Activated T-helper 1 cell treated with anti-CD3 and anti-CD28 coated beads, Interleukin-12 subunit alpha, Interleukin-12 subunit beta, Interleukin-2, Interleukin-4 antibody, amounts not matched to agents 30 ng/mL and 10 ng/mL and 1 ng/mL, durations not matched to agents 14 hours and 24 hours and 36 hours (primary cell): ENCODE measurements at regions of chr16 and their contacts with region 1.

Region 1: DNA sequence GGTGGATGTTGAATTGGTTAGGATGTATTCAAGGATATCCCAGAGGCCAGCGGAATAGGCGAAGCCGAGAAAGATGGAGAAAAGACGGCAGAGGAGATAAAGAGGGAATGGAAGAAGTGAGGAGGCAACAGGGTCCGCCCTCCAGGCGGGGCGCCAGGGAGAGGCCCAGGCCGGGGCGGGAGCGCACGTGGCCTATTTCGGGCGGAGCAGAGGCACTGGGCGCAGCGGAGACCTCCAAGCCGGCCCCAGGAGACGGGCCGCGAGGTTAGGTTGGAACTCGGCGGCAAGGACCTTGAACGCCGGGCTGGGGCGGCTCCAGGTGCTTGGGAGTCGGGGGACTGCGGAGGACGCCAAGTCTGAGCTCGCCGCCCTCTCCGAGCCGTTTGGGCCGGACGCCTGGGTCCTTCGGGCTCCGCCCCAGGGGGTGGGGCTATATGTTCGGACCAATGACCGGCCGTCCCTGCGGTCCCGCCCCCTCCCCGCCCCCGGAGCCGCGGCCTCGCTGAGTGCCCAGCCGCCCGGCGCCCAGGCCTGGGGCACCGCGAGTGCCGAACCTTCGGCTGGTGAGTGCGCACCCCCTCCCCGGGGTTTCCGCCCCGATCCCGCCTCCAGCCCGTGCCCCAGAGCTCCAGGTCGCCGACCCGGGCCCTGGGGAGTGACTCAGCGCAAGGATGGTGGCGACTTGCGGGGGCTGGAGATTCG is at the start of gene ZNF771:
- DNase-seq: peak; percentile 85
- H3K4me3 Mint-ChIP-seq: peak within 1 kb of the TSS; percentile 100
- H3K27ac Mint-ChIP-seq: peak within 1 kb of the TSS; percentile 100
- H3K4me1 Mint-ChIP-seq: peaks cover 25% of the 10 kb centered on the region
- H3K27me3 Mint-ChIP-seq: peaks cover 4% of the 10 kb centered on the region
- total RNA-seq, gene ZNF771: 8.1 and 8.9 TPM in 2 replicates

Region 2: GRCh38 chr16:30091474-30092372 is 315.5 kb before region 1 on chr16 and contains the start of gene TBX6:
- intact Hi-C with region 1: loop called (anchors 5 kb)
- DNase-seq: peak; percentile 94
- H3K4me3 Mint-ChIP-seq: peak within 1 kb of the TSS; percentile 88
- H3K27ac Mint-ChIP-seq: peak within 1 kb of the TSS; percentile 90
- H3K4me1 Mint-ChIP-seq: peaks cover 56% of the 10 kb centered on the region
- H3K27me3 Mint-ChIP-seq: no peaks in the 10 kb centered on the region
- total RNA-seq, gene TBX6: 1.6 and 1.8 TPM in 2 replicates

Region 3: DNA sequence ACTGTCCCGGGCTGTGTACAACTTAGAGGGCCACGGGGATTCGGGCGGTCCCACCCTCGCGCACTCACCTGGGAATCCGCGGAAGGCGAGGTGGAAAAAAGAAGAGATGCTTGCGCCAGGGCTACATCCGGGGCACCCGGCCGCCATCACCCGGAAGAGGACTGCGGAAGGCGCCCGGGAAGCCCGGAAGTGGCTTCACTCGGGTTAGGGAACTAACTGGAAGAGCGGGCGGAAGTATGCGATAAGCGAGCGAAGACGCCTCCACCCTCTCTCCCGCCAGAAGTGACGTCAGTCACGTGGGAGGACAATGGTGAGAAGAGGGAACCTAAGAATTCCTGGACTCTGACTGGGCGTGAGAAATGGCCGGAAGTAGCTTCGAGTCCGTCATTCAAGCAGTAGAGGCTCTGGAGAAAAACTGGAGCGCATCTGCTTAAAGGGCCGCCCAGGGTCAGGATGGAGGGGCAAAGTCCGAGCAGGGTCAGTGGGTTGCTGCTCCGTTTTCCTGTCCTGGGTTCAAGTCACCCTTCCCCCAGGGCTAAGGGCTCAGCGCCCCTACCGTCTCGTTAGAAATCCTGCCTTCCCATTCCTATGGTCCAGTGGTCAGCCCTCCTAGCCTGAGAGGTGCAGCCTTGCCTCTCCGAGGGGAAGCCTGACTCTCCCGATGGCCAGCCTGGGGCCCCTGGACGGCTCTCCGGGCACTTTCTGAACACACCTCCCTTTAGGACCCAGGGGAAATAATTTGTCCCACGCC is 51.9 kb before region 1 on chr16 and contains the start of gene CD2BP2:
- intact Hi-C with region 1: loop called (anchors 1 kb)
- DNase-seq: peak; percentile 87
- H3K4me3 Mint-ChIP-seq: peak within 1 kb of the TSS; percentile 91
- H3K27ac Mint-ChIP-seq: peak within 1 kb of the TSS; percentile 88
- H3K4me1 Mint-ChIP-seq: peaks cover 46% of the 10 kb centered on the region
- H3K27me3 Mint-ChIP-seq: no peaks in the 10 kb centered on the region
- total RNA-seq, gene CD2BP2: 100 and 104 TPM in 2 replicates

Region 4: DNA sequence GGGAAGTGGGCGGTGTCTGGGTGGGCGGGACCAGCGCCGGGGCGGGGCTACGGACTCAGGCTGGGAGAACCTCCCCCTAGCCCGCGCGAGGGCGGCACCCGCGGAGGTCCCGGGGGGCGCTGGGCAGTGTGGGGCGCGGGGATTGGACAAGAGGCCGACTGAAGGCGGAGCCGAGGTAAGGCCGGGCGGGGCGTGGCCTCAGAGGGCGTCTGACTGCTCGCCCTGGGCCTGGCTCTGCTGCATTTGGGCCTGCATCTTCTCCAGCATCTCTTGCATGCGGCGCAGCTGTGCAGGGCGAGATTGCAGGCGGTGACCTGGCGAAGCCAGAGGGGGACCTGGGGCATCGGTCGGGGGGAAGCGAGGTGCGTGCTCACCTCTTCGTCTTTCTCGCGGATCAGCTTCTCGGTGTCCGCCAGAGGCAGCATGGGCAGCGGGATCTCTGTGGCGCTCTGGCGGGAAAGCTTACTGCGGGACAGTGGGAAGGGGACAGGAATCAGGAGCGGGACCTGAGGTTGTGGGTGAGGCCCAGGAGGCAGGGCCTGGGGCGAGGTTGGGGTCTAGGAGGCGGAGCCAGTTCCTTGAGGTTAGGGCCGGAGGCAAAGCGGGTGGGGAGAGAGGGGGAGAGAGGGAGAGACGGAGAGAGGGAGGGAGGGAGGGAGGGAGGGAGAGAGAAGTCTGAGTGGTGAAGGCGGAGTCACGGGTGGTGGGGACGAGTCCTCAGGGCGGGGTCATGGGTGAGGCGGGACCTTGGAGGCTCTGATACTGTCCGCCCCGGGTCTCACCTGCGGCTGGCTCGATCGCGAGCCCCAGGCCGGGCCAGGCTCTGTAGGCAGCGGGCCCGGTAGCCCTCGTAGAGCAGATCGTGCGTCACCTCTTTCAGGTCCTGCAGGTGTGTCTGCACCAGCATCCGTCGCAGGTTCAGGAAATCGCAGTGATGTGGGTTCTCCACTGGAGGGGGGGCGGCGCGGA is 28.7 kb before region 1 on chr16:
- intact Hi-C with region 1: loop called (anchors 1 kb)
- DNase-seq: peak; percentile 98
- H3K4me3 Mint-ChIP-seq: peak overlapping the region; percentile 97
- H3K27ac Mint-ChIP-seq: peak overlapping the region; percentile 100
- H3K4me1 Mint-ChIP-seq: peaks cover 55% of the 10 kb centered on the region
- H3K27me3 Mint-ChIP-seq: peaks cover 2% of the 10 kb centered on the region

Region 5: DNA sequence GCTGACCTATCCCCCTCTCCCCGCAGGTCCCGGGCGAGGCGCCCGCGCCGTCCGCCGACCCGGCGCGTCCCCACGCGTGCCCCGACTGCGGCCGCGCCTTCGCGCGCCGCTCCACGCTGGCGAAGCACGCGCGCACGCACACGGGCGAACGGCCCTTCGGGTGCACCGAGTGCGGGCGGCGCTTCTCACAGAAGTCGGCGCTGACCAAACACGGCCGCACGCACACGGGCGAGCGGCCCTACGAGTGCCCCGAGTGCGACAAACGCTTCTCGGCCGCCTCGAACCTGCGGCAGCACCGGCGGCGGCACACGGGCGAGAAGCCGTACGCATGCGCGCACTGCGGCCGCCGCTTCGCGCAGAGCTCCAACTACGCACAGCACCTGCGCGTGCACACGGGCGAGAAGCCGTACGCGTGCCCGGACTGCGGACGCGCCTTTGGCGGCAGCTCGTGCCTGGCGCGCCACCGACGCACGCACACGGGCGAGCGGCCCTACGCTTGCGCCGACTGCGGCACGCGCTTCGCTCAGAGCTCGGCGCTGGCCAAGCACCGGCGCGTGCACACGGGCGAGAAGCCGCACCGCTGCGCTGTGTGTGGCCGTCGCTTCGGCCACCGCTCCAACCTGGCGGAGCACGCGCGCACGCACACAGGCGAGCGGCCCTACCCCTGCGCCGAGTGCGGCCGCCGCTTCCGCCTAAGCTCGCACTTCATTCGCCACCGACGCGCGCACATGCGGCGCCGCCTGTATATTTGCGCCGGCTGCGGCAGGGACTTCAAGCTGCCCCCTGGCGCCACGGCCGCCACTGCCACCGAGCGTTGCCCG is 10.5 kb after region 1 on chr16:
- intact Hi-C with region 1: loop called (anchors 1 kb)
- DNase-seq: peak; percentile 86
- H3K4me3 Mint-ChIP-seq: peak overlapping the region; percentile 70
- H3K27ac Mint-ChIP-seq: no peak overlapping the region
- H3K4me1 Mint-ChIP-seq: peaks cover 36% of the 10 kb centered on the region
- H3K27me3 Mint-ChIP-seq: no peaks in the 10 kb centered on the region